Endothelial cell of umbilical vein (primary cell): ENCODE measurements at regions of chr1 and their contacts with region 1.

Region 1: DNA sequence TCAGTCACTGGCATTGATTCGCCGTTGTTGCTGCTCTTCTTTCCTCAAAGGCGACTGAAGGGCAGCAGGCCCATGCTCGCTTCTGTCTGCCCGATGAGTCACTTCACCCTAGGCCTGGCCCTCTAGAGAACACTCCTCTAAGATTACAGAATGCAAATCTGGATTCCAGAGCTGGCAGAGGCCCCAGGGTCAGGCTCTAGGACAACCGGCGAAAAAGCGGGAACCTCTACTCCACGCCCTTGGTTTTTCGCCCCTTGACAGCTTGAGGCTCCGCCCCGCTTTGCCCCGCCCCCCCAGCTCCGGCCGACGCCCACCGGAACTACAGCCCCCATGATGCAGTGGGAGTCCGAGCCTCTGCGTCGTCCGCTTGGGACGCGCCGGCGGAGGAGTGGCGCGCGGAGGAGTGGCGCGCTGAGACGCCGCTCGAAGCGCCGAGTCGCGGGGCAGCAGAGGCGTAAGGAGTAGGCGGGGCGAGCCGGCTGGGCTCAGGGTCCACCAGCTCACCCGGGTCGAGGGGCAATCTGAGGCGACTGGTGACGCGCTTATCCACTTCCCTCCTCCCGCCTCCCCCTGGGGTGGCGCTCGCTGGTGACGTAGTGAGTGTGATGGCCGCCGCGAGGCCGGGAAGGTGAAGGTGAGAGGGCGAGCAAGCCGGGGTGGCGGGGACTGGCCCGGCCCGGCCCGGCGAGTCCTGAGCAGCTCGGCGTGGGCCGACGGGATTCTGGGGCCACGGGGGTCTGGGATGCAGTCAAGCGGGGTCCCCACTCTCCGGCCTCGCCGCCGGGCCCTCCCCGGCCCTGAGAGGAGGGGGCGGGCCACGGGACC is at the start of gene MFN2:
- DNase-seq: peak; percentile 99
- H3K4me3 ChIP-seq: peak within 1 kb of the TSS; percentile 86 to 94 (median 89)
- H3K27ac ChIP-seq: peak within 1 kb of the TSS; percentile 69
- H3K4me1 ChIP-seq: peaks cover 18% of the 10 kb centered on the region
- H3K27me3 ChIP-seq: no peaks in the 10 kb centered on the region
- CTCF ChIP-seq: no peak
- POLR2A ChIP-seq: peak; percentile 61
- total RNA-seq, gene MFN2: 66.6 and 82.4 TPM in 2 replicates

Region 2: DNA sequence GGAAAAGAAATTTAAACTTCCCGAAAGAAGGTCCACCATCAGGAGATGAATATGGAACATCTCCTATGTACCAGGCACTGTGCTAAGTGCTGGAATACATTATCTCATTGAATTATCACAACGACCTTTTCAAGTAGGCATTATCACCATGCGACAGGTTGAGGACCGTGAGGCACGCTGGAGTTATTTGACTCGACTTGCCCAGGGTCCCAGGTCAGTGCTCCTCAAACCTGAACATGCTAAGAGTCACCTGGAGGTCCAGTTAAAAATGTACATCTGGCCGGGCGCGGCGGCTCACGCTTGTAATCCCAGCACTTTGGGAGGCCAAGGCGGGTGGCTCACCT is 260.1 kb before region 1 on chr1:
- CTCF ChIA-PET with region 1: no interaction called
- POLR2A ChIA-PET with region 1: no interaction called
- dilution Hi-C with region 1: no loop called
- intact Hi-C with region 1: no loop called
- DNase-seq: no peak
- H3K4me3 ChIP-seq: no peak overlapping the region
- H3K27ac ChIP-seq: no peak overlapping the region
- H3K4me1 ChIP-seq: peaks cover 4% of the 10 kb centered on the region
- H3K27me3 ChIP-seq: peaks cover 0 to 4% of the 10 kb centered on the region in 2 experiments
- CTCF ChIP-seq: no peak
- POLR2A ChIP-seq: no peak

Region 3: DNA sequence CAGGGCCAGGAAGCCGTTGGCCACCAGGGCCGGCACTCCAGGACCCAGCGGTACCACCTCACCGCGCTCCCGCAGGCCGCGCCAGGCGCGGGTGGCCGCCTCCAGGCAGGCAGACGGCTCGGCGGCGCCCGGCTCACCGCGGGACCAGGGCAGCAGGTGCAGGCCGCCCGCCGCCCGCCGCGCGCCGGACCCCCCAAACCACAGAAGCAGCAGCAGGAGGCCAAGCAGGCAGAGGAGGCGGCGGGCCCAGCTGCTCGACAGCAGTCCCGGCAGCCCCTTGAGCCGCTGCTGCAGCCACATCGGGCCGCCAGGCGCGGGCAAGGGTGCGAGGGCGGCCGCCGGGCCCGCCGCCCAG is 54.1 kb before region 1 on chr1:
- CTCF ChIA-PET with region 1: no interaction called
- POLR2A ChIA-PET with region 1: interaction called, 9 read pairs
- dilution Hi-C with region 1: no loop called
- intact Hi-C with region 1: loop called (anchors 1 kb)
- DNase-seq: no peak
- H3K4me3 ChIP-seq: peak overlapping the region; percentile 20 to 56 (median 26)
- H3K27ac ChIP-seq: no peak overlapping the region
- H3K4me1 ChIP-seq: peaks cover 34% of the 10 kb centered on the region
- H3K27me3 ChIP-seq: no peaks in the 10 kb centered on the region
- CTCF ChIP-seq: no peak
- POLR2A ChIP-seq: no peak

Region 4: DNA sequence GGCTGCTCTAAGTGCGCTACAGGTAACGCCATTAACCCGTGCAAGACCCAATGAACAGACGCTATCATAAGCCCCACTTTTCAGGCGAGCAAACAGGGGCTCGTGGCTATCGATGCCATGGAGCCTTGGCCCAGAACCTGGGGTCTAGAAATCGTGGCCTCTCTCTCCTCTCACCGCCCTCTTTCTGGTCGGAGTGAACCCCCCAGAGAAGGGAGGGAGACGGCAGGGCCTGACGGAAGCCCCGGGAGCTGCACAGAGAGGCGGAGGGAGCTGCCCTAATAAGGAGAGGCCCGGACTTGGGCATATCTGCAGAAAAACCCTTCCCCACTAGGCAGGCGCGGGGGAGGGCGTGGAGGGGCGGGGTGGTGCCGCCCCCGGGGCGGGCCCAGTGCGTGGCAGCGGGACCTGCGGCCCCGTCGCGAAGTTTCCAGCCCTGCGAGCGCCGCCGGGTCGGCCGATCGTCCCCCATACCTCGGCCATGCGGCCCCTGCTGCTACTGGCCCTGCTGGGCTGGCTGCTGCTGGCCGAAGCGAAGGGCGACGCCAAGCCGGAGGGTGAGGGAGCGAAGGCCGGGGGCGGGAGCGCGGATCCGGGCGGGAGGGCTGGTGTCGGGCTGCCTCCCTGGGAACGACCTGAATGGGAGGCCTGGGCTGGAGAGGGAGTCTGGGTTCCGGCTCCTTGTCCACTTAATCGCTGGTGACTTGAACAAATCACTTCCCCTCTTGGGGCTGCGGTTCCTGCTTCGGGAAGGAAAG is 45.6 kb before region 1 on chr1 and contains the start of gene PLOD1:
- CTCF ChIA-PET with region 1: interaction called, 3 read pairs
- POLR2A ChIA-PET with region 1: interaction called, 9 read pairs
- dilution Hi-C with region 1: no loop called
- intact Hi-C with region 1: loop called (anchors 1 kb)
- DNase-seq: peak; percentile 91
- H3K4me3 ChIP-seq: peak within 1 kb of the TSS; percentile 41 to 70 (median 59)
- H3K27ac ChIP-seq: peak within 1 kb of the TSS; percentile 36
- H3K4me1 ChIP-seq: peaks cover 33% of the 10 kb centered on the region
- H3K27me3 ChIP-seq: no peaks in the 10 kb centered on the region
- CTCF ChIP-seq: no peak
- POLR2A ChIP-seq: peak; percentile 89
- total RNA-seq, gene PLOD1: 245 and 260 TPM in 2 replicates

Region 5: DNA sequence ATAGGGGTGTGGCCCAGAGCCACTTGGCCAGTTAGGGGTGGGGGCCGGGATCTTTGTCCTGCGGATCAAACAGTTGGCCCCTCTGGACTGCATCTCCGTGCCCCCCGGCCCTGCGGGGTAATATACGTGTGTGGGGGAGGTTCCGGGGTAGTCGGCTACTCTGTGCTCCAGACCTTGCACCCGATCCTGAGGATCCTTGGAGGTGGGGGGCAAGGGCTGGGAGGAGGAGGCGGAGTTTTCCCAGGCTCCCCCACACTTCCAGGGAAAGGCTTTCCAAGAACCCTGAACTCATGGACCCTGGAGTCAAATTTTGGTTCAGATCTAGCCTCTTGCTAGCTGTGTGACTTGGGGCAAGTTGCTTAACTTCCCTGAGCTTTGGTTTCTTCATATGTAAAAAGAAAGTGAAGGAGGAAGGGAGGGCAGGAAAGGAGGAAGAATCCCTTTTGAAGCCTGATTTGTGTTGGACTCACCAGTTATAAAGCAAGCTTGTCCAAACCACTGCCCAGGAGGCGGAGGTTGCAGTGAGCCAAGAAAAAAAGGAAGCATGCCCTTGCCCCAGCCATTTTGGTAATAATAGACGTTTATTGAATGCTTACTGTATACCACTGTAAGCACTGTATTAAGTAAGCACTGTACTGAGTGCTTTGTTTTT is 39.9 kb after region 1 on chr1:
- CTCF ChIA-PET with region 1: no interaction called
- POLR2A ChIA-PET with region 1: interaction called, 5 read pairs
- dilution Hi-C with region 1: no loop called
- intact Hi-C with region 1: loop called (anchors 2 kb)
- DNase-seq: peak; percentile 30
- H3K4me3 ChIP-seq: peak overlapping the region; percentile 11 to 87 (median 70)
- H3K27ac ChIP-seq: no peak overlapping the region
- H3K4me1 ChIP-seq: no peaks in the 10 kb centered on the region
- H3K27me3 ChIP-seq: no peaks in the 10 kb centered on the region
- CTCF ChIP-seq: no peak
- POLR2A ChIP-seq: no peak

Region 6: GRCh38 chr1:12143631-12144155 is 163.6 kb after region 1 on chr1:
- CTCF ChIA-PET with region 1: no interaction called
- POLR2A ChIA-PET with region 1: no interaction called
- dilution Hi-C with region 1: no loop called
- intact Hi-C with region 1: no loop called
- DNase-seq: peak; percentile 75
- H3K4me3 ChIP-seq: no peak overlapping the region
- H3K27ac ChIP-seq: no peak overlapping the region
- H3K4me1 ChIP-seq: peaks cover 29% of the 10 kb centered on the region
- H3K27me3 ChIP-seq: no peaks in the 10 kb centered on the region
- CTCF ChIP-seq: no peak
- POLR2A ChIP-seq: no peak